Left colon (tissue), 2 donors: ENCODE measurements at regions of chr17 and their contacts with region 1.

Region 1: DNA sequence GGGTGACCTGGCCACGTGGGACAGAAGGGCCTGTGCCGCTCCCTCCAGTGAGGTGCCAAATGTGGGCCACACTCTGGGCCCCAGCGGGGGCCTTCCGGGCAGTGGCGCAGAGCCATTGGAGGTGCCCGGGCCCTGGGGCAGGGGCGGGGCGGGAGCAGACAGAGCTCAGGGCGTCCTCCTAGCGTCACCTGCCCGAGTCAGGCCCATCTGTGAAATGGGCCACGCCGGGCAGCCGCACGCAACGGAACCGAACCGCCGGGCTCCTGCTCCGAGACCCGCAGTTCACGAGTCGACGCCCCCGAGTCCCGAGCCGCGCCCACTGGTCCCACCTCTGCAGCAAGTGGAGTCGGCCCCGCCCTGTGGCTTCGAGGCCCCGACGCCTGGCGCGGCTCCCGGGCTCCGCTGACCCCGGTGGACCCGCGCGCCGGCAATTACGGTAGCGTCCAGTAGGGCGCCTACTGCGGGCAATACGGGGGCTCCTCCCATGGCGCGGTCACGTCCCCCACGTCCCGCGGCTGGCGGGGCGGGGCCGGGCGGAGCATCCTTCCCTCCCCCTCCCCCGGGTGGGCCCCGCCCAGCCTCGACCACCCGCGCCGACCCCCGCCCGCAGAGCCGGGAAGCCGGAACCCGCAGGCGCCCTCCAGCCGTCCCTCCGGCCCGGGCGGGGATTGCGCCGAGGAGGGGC is 1.9 kb downstream of the SLC16A3 start:
- DNase-seq: peak; percentile 91 to 94
- ATAC-seq: peak; percentile 65

Region 2: GRCh38 chr17:82320956-82321927 is 90.5 kb after region 1 on chr17:
- intact Hi-C with region 1: loop called (anchors 10 kb)
- DNase-seq: peak in 1 of 2 donors; percentile 55
- ATAC-seq: peak; percentile 16